Activated T-helper 1 cell treated with anti-CD3 and anti-CD28 coated beads, Interleukin-12 subunit alpha, Interleukin-12 subunit beta, Interleukin-2, Interleukin-4 antibody, amounts not matched to agents 30 ng/mL and 10 ng/mL and 1 ng/mL, durations not matched to agents 14 hours and 24 hours and 36 hours (primary cell): ENCODE measurements at regions of chr21 and their contacts with region 1.

Region 1: DNA sequence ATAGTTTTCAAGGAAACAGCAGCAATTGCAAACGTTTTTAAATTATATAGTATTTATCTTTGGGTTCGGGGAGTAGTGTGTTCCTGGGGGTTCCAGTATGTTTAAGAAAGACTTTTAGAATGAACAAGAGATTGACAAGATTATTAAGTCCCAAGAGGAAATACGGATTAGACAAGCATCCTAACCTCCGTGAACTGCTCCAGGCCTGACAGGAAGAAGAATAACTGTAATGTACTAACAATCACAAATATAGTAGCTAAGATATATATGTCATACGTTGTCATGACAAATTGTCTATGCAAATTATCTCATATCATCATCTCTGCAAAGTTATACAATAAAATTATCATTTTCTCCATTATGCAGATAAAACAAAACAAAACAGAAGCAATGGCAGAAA is 1397.2 kb downstream of the MRPL39 start:
- DNase-seq: no peak
- H3K4me3 Mint-ChIP-seq: no peak overlapping the region
- H3K27ac Mint-ChIP-seq: no peak overlapping the region
- H3K4me1 Mint-ChIP-seq: no peaks in the 10 kb centered on the region
- H3K27me3 Mint-ChIP-seq: no peaks in the 10 kb centered on the region

Region 2: DNA sequence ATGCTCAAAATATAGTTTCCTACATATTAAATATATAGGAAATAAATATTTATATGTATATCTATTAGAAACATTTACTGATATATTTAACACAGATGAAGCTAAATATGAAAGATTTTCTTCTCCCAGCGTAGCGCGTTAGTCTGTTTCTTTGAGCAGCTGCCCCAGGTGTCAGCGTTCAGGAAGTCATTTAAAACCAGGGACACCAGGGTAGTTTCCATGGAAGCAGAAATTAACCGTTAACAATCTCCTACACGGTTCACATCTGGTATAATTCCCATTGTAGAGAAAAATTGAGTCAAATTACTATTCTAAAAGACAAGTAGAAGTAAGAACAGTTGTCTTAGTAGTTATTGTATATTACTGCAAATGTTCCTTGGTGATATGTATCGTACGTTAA is 46.6 kb before region 1 on chr21:
- intact Hi-C with region 1: loop called (anchors 5 kb)
- DNase-seq: no peak
- H3K4me3 Mint-ChIP-seq: no peak overlapping the region
- H3K27ac Mint-ChIP-seq: no peak overlapping the region
- H3K4me1 Mint-ChIP-seq: no peaks in the 10 kb centered on the region
- H3K27me3 Mint-ChIP-seq: no peaks in the 10 kb centered on the region